Ascending aorta (tissue), 2 donors: ENCODE measurements at regions of chr4 and their contacts with region 1.

Region 1: GRCh38 chr4:41360214-41360920 is 103.6 kb downstream of the UCHL1 start:
- DNase-seq: peak; percentile 12 to 87
- H3K4me3 ChIP-seq: peak overlapping the region; percentile 88 to 98
- H3K27ac ChIP-seq: peak overlapping the region; percentile 91 to 96
- H3K4me1 ChIP-seq: peaks cover 12 to 32% of the 10 kb centered on the region in 2 donors
- H3K27me3 ChIP-seq: no peaks in the 10 kb centered on the region
- CTCF ChIP-seq: no peak

Region 2: DNA sequence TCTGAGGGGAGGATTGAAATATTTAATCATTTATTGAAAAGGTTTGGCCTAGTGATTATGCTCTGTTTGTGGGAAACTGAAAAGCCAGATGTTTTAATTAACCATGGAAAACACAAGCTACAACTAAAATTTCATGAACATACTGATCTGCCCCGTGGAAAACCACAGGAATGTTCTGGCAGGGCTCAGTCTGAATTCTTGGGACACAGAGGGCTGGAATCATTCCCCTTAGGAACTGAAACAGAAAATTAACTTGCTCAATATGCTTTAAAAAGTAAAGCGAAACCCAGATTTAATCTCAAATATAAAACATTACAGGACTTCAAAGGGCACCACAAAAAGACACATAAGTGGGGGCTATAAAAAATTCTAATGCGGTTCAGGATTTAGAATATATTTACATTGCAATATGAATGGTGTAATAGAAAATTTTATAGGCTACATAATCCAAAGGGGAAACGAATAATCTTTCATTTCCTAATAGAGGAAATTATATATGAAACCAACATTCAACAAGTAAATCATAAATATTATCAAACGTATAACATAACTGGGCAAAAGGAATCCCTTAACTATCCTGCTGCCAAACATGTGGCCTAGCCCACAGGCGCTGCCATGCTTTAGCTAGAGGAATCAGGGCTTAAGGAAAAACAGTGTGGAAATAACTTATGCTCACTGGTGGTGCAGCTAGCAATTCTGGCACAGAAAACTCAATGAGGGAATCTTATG is 216.9 kb before region 1 on chr4:
- intact Hi-C with region 1: loop called (anchors 10 kb)
- DNase-seq: peak in 1 of 2 donors; percentile 81
- H3K4me3 ChIP-seq: peak overlapping the region; percentile 24 to 45
- H3K27ac ChIP-seq: peak overlapping the region; percentile 80 to 92
- H3K4me1 ChIP-seq: peaks cover 27 to 60% of the 10 kb centered on the region in 2 donors
- H3K27me3 ChIP-seq: no peaks in the 10 kb centered on the region
- CTCF ChIP-seq: no peak

Region 3: GRCh38 chr4:41418444-41418843 is 58.1 kb after region 1 on chr4:
- intact Hi-C with region 1: loop called (anchors 5 kb)
- DNase-seq: peak; percentile 29 to 83
- H3K4me3 ChIP-seq: peak overlapping the region in 1 of 2 donors; percentile 43
- H3K27ac ChIP-seq: peak overlapping the region; percentile 65 to 74
- H3K4me1 ChIP-seq: peaks cover 0 to 22% of the 10 kb centered on the region in 2 donors
- H3K27me3 ChIP-seq: no peaks in the 10 kb centered on the region
- CTCF ChIP-seq: no peak

Region 4: DNA sequence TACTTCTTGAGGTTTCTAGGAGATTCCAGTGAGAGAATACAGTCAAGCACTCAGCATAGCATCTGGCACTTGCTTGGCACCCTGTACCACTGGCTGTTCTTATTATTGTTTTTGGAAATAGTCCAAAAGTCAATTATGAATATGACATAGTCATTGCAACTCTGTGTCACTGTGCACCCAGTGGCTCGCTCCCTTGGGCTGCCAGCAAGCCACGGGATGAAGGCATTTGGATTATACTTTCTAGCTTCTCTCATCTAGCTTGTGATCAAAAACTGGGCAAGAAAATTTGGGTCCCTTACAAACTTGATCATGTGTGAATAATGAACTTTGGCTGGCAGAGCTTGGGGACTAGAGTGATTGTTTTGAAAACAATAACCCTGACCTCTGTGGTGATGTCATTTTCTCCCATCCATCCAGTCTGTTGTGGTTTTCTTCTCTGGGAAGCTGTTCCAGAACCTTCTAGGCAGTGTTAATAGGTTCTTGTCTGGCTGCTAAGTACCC is 144.8 kb after region 1 on chr4:
- intact Hi-C with region 1: loop called (anchors 2 kb)
- DNase-seq: peak; percentile 21 to 86
- H3K4me3 ChIP-seq: no peak overlapping the region
- H3K27ac ChIP-seq: peak overlapping the region; percentile 71 to 75
- H3K4me1 ChIP-seq: peaks cover 3 to 36% of the 10 kb centered on the region in 2 donors
- H3K27me3 ChIP-seq: no peaks in the 10 kb centered on the region
- CTCF ChIP-seq: no peak

Region 5: GRCh38 chr4:41620594-41621256 is 260.4 kb after region 1 on chr4:
- intact Hi-C with region 1: loop called (anchors 2 kb)
- DNase-seq: peak in 1 of 2 donors; percentile 73
- H3K4me3 ChIP-seq: peak overlapping the region in 1 of 2 donors; percentile 12
- H3K27ac ChIP-seq: peak overlapping the region; percentile 72 to 76
- H3K4me1 ChIP-seq: peaks cover under 1 to 31% of the 10 kb centered on the region in 2 donors
- H3K27me3 ChIP-seq: no peaks in the 10 kb centered on the region
- CTCF ChIP-seq: no peak

Region 6: GRCh38 chr4:41661442-41662076 is 301.2 kb after region 1 on chr4:
- intact Hi-C with region 1: loop called (anchors 5 kb)
- DNase-seq: peak in 1 of 2 donors; percentile 79
- H3K4me3 ChIP-seq: no peak overlapping the region
- H3K27ac ChIP-seq: no peak overlapping the region
- H3K4me1 ChIP-seq: peaks cover 7% of the 10 kb centered on the region in 2 donors
- H3K27me3 ChIP-seq: no peaks in the 10 kb centered on the region
- CTCF ChIP-seq: peak; percentile 73 to 93 (median 92)

Region 7: DNA sequence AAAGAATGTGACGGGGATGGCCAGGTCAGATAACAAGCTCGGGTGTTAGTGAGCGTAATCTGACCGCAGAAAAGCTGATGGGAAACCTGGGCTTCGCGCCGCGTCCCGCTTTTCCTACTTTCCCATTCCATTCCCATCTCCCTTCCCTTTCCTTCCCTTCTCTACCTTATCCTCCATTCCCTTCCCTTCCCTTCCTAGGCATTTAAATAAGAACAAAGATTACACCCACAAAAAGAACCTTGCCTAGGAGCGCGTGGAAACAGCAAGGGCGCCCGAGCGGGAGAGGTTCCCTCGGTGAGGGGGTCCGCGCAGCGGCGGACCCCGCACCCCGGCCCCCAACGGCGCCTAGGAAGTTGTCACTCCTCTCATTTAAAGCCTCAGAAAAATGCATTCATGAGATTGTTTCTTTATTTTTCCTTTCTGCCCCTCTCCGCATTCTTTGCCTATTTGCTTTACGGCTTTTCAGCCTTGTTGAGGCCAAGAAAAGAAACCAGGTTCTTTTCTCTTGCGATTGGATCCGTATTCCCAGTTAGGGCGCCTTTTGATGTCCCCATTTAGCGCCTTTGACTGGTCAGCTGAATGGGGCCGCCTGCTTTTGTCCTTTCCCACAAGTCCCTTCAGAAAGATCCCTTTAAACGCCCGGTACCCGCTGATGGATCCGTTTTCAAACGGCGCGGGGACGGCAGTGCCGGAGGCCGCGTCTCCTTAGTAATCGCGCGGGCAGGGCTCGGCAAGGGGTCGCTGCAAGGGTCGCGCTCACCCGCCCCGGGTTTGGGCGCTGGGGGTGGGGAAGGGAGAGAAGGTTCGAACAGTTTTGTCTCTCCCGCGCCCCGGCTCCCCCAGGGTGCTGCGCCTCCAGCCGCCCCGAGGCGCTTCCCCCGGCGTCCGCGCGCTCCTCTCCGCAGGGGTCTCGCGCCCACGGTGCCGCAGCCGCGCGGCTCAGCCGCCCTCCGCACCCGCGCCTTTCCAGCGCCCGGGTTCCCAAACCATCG is 520.8 kb after region 1 on chr4:
- intact Hi-C with region 1: no loop called
- DNase-seq: no peak
- H3K4me3 ChIP-seq: peak overlapping the region; percentile 53 to 70
- H3K27ac ChIP-seq: no peak overlapping the region
- H3K4me1 ChIP-seq: peaks cover 11 to 18% of the 10 kb centered on the region in 2 donors
- H3K27me3 ChIP-seq: peaks cover 18% of the 10 kb centered on the region
- CTCF ChIP-seq: no peak